ENCODE measurements at regions of chr21 and their contacts with region 1.

Region 1: GRCh38 chr21:28069450-28069923 is 923.2 kb downstream of the LTN1 start:
- DNase-seq: peak; percentile 83
- ATAC-seq: peak; percentile 88
- H3K4me3 ChIP-seq: no peak overlapping the region
- H3K27ac ChIP-seq: peak overlapping the region; percentile 46; the same call in 1 of the 2 replicates
- H3K4me1 ChIP-seq: peaks cover 8% of the 10 kb centered on the region
- H3K27me3 ChIP-seq: no peaks in the 10 kb centered on the region
- CTCF ChIP-seq: no peak
- POLR2A ChIP-seq: no peak
- RAD21 ChIP-seq: no peak

Region 2: DNA sequence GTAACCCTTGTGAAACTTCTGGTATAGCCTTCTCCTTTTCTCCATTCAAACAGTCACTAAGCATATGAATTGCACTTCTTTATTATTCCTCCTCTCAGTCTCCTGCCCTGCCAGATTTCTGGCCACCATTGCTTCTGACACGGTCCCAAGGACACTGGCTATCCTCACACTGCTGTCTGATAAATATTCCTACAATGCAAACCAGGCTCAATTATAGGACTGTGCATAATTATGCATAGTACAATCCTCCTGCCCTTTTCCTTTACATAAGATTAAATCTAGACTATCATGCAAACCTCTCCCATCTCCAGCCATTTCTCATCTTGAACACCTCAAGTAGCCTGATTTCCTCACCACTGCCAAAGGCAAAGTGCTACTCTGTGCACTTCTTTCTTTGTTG is 398.3 kb before region 1 on chr21:
- CTCF ChIA-PET with region 1: no interaction called
- POLR2A ChIA-PET with region 1: no interaction called
- dilution Hi-C with region 1: no loop called
- in situ Hi-C with region 1: no loop called
- intact Hi-C with region 1: no loop called
- DNase-seq: no peak
- ATAC-seq: no peak
- H3K4me3 ChIP-seq: no peak overlapping the region
- H3K27ac ChIP-seq: no peak overlapping the region
- H3K4me1 ChIP-seq: no peaks in the 10 kb centered on the region; the same call in 1 of the 2 replicates
- H3K27me3 ChIP-seq: no peaks in the 10 kb centered on the region
- CTCF ChIP-seq: no peak
- POLR2A ChIP-seq: no peak
- RAD21 ChIP-seq: no peak

Region 3: DNA sequence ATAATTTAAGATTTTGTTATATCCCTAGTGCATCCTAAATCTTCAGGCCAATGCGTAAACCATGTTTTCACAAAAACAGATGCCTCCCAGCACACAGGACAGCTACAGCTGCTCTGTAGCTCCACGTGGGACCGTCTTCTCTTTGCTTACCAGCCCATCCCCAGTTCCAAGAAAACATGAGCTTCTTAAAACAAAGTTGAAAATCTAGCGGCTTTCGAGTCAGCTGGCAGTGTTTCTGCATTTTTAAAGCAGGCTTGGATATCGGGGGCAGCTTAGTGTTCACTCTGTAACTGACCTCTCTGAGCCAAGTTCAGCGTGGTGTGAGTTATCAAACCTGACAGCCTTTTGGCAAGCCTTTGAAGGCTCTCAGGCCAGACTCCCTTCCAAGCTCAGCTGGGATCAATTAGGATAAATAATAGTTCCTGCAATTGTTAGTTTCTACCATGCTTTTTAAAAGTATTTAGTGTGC is 41.7 kb after region 1 on chr21:
- CTCF ChIA-PET with region 1: no interaction called
- POLR2A ChIA-PET with region 1: no interaction called
- dilution Hi-C with region 1: no loop called
- in situ Hi-C with region 1: no loop called
- intact Hi-C with region 1: loop called (anchors 10 kb)
- DNase-seq: peak; percentile 92
- ATAC-seq: peak; percentile 96
- H3K4me3 ChIP-seq: peak overlapping the region; percentile 2; the same call in 1 of the 2 replicates
- H3K27ac ChIP-seq: peak overlapping the region; percentile 92
- H3K4me1 ChIP-seq: peaks cover 4% of the 10 kb centered on the region; the same call in 1 of the 2 replicates
- H3K27me3 ChIP-seq: no peaks in the 10 kb centered on the region
- CTCF ChIP-seq: no peak
- POLR2A ChIP-seq: no peak
- RAD21 ChIP-seq: no peak

Region 4: DNA sequence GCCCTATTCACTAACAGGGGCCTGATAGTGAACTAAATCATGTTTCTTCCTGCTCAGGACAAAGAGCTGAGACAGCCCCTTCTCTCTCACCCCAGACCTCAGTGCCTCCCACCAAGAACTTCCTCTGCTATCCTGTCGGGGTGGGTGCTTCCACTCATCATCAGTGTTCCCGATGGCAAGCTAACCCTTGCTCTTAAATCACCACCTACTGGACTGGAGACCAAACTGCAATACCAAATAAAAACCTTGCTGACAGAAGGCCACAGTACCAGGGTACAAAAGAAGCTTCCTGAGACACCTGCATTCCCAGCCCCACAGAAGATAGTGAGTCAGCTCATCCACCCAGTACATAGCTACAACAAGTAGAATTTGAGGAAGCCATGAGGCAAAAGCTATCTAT is 123.7 kb after region 1 on chr21:
- CTCF ChIA-PET with region 1: no interaction called
- POLR2A ChIA-PET with region 1: no interaction called
- dilution Hi-C with region 1: no loop called
- in situ Hi-C with region 1: no loop called
- intact Hi-C with region 1: no loop called
- DNase-seq: no peak
- ATAC-seq: no peak
- H3K4me3 ChIP-seq: no peak overlapping the region
- H3K27ac ChIP-seq: no peak overlapping the region
- H3K4me1 ChIP-seq: no peaks in the 10 kb centered on the region
- H3K27me3 ChIP-seq: no peaks in the 10 kb centered on the region
- CTCF ChIP-seq: no peak
- POLR2A ChIP-seq: no peak
- RAD21 ChIP-seq: no peak

Region 5: GRCh38 chr21:28229814-28230213 is 160.3 kb after region 1 on chr21:
- CTCF ChIA-PET with region 1: no interaction called
- POLR2A ChIA-PET with region 1: no interaction called
- dilution Hi-C with region 1: no loop called
- in situ Hi-C with region 1: no loop called
- intact Hi-C with region 1: loop called (anchors 10 kb)
- DNase-seq: peak; percentile 93
- ATAC-seq: peak; percentile 64
- H3K4me3 ChIP-seq: no peak overlapping the region
- H3K27ac ChIP-seq: peak overlapping the region; percentile 91; the same call in 1 of the 2 replicates
- H3K4me1 ChIP-seq: peaks cover 12% of the 10 kb centered on the region
- H3K27me3 ChIP-seq: no peaks in the 10 kb centered on the region
- CTCF ChIP-seq: no peak
- POLR2A ChIP-seq: no peak
- RAD21 ChIP-seq: no peak

Region 6: GRCh38 chr21:28516991-28517592 is 447.6 kb after region 1 on chr21:
- CTCF ChIA-PET with region 1: no interaction called
- POLR2A ChIA-PET with region 1: no interaction called
- dilution Hi-C with region 1: no loop called
- in situ Hi-C with region 1: no loop called
- intact Hi-C with region 1: loop called (anchors 10 kb)
- DNase-seq: no peak
- ATAC-seq: no peak; the same call in 1 of the 2 replicates
- H3K4me3 ChIP-seq: no peak overlapping the region
- H3K27ac ChIP-seq: peak overlapping the region; percentile 13; the same call in 1 of the 2 replicates
- H3K4me1 ChIP-seq: no peaks in the 10 kb centered on the region; the same call in 1 of the 2 replicates
- H3K27me3 ChIP-seq: no peaks in the 10 kb centered on the region
- CTCF ChIP-seq: peak; percentile 32
- POLR2A ChIP-seq: no peak
- RAD21 ChIP-seq: peak; percentile 43

Region 7: DNA sequence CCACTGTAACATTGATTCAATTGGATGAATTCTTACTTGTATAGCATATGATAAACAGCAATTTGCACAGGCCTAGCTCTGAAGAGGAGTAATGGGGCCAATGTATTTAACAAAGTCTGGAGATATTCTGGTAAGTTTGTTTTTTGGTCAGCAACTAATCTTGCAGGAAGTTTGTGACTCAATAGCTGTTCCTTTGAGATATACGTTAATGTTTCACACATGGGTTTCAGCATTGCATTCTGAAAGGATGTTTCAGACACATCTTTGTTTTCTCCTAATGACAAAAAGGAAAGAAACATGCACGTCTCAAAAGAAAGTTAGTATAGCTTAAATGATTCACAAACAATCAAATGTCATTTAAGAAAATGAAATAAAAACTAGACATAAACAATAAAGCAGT is 874.1 kb after region 1 on chr21:
- CTCF ChIA-PET with region 1: no interaction called
- POLR2A ChIA-PET with region 1: no interaction called
- dilution Hi-C with region 1: no loop called
- in situ Hi-C with region 1: loop called (anchors 25 kb)
- intact Hi-C with region 1: no loop called
- DNase-seq: peak; percentile 28
- ATAC-seq: no peak; the same call in 1 of the 2 replicates
- H3K4me3 ChIP-seq: no peak overlapping the region
- H3K27ac ChIP-seq: no peak overlapping the region
- H3K4me1 ChIP-seq: no peaks in the 10 kb centered on the region
- H3K27me3 ChIP-seq: no peaks in the 10 kb centered on the region
- CTCF ChIP-seq: no peak
- POLR2A ChIP-seq: no peak
- RAD21 ChIP-seq: no peak